ENCODE measurements at regions of chr5 and their contacts with region 1.

Region 1: GRCh38 chr5:140113699-140114263 is at the start of gene PURA:
- DNase-seq: peak; percentile 80 to 98 (median 88)

Region 2: GRCh38 chr5:140145818-140146522 is 32.2 kb after region 1 on chr5:
- intact Hi-C with region 1: loop called (anchors 5 kb)
- DNase-seq: peak; percentile 32 to 94 (median 55)

Region 3: GRCh38 chr5:140189977-140190871 is 76.4 kb after region 1 on chr5:
- intact Hi-C with region 1: no loop called
- DNase-seq: no peak

Measured in posterior cingulate gyrus (tissue), 11 donors.